ENCODE measurements at regions of chr3 and their contacts with region 1.

Region 1: DNA sequence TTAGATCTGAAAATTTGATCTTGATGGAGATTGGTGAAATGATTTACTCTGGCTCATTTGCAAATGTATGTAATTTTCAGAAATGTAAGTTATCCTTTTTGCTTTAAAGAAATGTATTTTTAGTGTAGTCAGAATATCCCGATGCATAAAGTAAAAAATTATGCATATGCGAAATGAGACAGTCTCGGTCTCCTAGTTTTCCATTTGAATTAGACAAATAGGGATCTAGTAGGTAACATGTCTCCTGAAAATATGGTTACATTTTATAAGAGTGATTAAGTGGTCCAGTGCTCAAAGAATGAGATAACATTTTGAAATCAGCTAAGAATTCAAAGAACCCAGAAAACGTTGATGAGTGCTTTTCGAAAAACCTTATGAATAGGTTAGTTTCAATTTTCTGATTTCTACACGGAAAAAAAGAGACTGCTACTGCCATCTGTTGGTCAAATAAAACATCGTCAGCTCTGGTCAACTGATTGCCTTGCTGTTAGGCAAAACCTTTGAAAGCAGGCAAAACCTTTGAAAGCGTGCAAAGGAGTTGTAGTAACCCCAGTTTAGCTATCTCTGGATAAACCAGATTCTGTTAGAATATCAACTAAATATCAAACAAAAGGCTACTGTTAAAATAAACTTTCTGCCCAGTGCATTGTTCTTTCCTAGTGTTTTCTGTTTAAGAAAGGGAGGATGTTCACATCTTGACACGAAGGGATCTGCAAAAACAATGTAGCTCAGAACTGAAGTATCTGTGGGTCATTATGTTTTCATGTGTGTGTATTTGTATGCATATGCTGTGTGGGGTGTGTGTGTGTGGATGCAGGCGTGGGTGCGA is 59.3 kb upstream of the CHMP2B start:
- DNase-seq: peak; percentile 46
- ATAC-seq: peak; percentile 76
- H3K4me3 ChIP-seq: peak overlapping the region; percentile 32 to 38
- H3K27ac ChIP-seq: no peak overlapping the region
- H3K4me1 ChIP-seq: no peaks in the 10 kb centered on the region
- H3K27me3 ChIP-seq: no peaks in the 10 kb centered on the region
- CTCF ChIP-seq: peak; percentile 20 to 76 (median 58); a peak in 5 of 6 replicates
- POLR2A ChIP-seq: no peak
- RAD21 ChIP-seq: peak; percentile 47

Region 2: DNA sequence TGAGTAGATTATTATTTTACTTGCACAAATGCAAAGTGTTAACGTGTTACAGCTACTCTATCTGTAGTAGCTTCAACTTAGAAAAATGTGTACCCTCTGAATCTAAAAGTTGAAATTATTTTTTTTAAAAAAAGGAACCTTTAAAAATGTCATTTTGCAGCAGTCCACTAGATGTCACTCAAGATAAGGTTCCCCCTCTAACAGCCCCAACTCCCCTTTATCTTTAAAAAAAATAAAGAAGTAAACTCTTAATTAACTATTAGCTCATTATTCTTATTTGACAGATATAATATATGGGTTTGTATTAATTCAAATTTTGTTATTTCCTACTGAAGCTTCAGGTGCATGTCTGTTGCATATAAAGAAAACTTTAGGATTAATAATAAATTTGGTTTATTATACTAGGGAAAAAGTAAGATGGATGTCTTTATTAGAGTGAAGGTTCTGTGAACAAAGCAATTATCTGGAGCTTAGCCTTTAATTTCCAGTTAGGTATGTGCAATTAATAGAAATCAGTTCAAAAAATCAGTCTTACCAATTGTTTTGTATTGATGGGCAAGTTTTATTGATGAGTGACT is 465.4 kb before region 1 on chr3:
- CTCF ChIA-PET with region 1: no interaction called
- POLR2A ChIA-PET with region 1: no interaction called
- RAD21 ChIA-PET with region 1: no interaction called
- intact Hi-C with region 1: loop called (anchors 10 kb)
- DNase-seq: no peak
- ATAC-seq: no peak
- H3K4me3 ChIP-seq: no peak overlapping the region
- H3K27ac ChIP-seq: no peak overlapping the region
- H3K4me1 ChIP-seq: no peaks in the 10 kb centered on the region
- H3K27me3 ChIP-seq: no peaks in the 10 kb centered on the region
- CTCF ChIP-seq: peak in 2 of 3 experiments; percentile 43 to 44; a peak in 3 of 6 replicates
- POLR2A ChIP-seq: no peak
- RAD21 ChIP-seq: peak; percentile 24; the same call in 1 of the 2 replicates

Region 3: DNA sequence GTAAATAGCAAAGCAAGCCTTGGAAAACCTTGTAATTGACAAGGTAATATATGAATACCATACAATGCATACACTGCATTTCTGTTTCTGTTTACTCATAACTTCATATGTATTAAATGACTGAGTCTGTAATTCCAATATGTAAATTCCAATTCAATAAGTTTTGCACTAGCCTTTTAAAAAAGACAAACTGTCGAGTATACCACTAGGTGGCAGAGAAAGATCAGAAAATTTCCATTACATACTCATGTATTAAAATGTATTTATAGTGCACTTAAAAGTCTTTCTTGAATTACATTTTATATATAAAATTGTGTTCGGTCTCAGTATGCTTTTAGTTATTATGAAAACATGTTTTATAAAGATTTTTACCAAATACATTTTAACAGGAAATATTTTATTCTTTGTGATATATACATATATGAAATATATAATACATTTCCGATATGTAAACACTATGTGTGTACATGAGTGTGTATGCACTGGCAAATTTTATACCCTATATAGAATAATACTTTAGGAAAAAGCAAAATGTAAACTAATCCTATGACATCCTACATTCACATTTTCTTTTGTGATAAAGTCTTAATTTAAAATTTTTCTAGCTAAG is 393.7 kb before region 1 on chr3:
- CTCF ChIA-PET with region 1: no interaction called
- POLR2A ChIA-PET with region 1: no interaction called
- RAD21 ChIA-PET with region 1: no interaction called
- intact Hi-C with region 1: loop called (anchors 1 kb)
- DNase-seq: no peak
- ATAC-seq: no peak
- H3K4me3 ChIP-seq: no peak overlapping the region
- H3K27ac ChIP-seq: no peak overlapping the region
- H3K4me1 ChIP-seq: no peaks in the 10 kb centered on the region
- H3K27me3 ChIP-seq: no peaks in the 10 kb centered on the region
- CTCF ChIP-seq: peak; percentile 20 to 54 (median 29); a peak in 3 of 6 replicates
- POLR2A ChIP-seq: no peak
- RAD21 ChIP-seq: peak; percentile 45; the same call in 1 of the 2 replicates

Region 4: DNA sequence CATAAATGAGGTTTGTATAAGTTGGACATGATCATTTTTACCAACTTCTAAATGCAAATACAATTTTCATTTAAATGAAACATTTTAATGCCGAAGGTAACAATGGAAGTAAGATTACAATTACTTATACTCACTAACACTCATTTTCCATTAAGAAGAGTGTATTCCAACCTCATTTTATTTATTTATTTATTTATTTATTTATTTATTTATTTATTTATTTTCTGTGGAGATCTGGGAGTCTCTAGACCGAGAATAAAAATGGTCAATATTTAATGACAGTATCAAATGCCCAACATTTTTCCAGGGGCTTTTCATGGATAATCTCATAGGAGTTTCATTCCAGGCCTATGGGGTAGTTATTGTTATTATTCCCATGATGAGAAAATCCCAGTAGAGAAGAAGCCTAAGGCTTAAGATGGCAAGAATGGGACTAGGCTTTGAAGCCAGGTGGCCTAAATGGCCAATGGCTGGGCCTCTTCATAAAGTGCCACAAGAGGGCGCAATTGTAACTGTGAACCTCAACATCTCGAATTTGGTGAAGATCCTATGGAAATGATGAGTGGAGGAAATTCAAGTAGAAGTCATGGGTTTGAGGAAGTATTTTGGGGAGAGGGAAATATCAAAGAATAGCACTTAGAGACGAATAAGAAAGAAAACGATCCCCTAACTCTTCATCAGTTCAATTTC is 198.2 kb before region 1 on chr3:
- CTCF ChIA-PET with region 1: no interaction called
- POLR2A ChIA-PET with region 1: no interaction called
- RAD21 ChIA-PET with region 1: no interaction called
- intact Hi-C with region 1: loop called (anchors 10 kb)
- DNase-seq: peak; percentile 38
- ATAC-seq: peak; percentile 75
- H3K4me3 ChIP-seq: no peak overlapping the region
- H3K27ac ChIP-seq: no peak overlapping the region
- H3K4me1 ChIP-seq: no peaks in the 10 kb centered on the region
- H3K27me3 ChIP-seq: no peaks in the 10 kb centered on the region
- CTCF ChIP-seq: peak; percentile 34 to 88 (median 73); a peak in 5 of 6 replicates
- POLR2A ChIP-seq: no peak
- RAD21 ChIP-seq: peak; percentile 52

Measured in HCT116 (cell line).